CD4-positive, alpha-beta memory T cell (primary cell): ENCODE measurements at regions of chr19 and their contacts with region 1.

Region 1: DNA sequence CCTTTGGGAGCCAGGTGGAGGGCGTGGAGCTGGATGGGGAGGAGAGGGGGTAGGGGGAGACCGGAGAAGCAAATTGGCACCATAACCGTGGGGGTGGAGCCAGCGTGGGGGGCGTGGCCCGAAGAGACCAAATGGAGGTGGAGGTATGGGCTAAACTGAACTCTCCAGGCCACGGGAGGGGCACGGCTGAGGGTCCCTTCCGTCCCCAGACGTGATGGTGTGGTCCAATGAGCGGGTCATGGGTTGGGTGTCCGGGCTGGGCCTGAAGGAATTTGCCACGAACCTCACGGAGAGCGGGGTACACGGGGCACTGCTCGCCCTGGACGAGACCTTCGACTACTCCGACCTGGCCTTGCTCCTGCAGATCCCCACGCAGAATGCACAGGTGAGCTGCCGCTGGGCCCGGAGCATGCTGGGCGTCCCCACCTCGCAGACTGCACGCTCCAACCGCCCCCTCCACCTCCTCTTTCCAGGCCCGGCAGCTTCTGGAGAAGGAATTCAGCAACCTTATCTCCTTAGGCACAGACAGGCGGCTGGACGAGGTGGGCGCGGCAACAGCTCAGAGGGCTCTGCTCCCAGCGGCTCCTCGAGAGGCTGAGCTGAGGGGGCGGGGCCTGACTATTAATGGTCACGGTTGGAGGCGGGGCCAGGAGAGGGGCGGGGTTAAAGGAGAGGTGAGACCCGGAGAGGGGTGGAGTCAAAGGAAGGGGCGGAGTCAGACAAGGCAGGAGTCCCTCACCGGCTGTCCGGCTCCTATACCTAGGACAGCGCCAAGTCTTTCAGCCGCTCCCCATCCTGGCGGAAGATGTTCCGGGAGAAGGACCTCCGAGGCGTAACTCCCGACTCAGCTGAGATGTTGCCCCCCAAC is 6.2 kb downstream of the HRC start:
- DNase-seq: peak; percentile 64 to 85 (median 69)
- H3K4me3 ChIP-seq: peak overlapping the region in 1 of 2 donors; percentile 42
- H3K4me3 Mint-ChIP-seq: peak overlapping the region; percentile 63 to 91 (median 74)
- H3K27ac ChIP-seq: no peak overlapping the region
- H3K27ac Mint-ChIP-seq: peak overlapping the region in 1 of 7 donors; percentile 71
- H3K4me1 ChIP-seq: peaks cover 46% of the 10 kb centered on the region
- H3K4me1 Mint-ChIP-seq: peaks cover 14 to 58% (median 26%) of the 10 kb centered on the region in 4 donors
- H3K27me3 ChIP-seq: peaks cover 39% of the 10 kb centered on the region
- H3K27me3 Mint-ChIP-seq: peaks cover 36 to 53% of the 10 kb centered on the region in 2 donors

Region 2: GRCh38 chr19:48999481-49000325 is 149.3 kb before region 1 on chr19:
- CTCF ChIA-PET with region 1: interaction called, 17 read pairs
- POLR2A ChIA-PET with region 1: no interaction called
- intact Hi-C with region 1: no loop called
- DNase-seq: peak; percentile 64 to 76 (median 69)
- H3K4me3 ChIP-seq: no peak overlapping the region
- H3K4me3 Mint-ChIP-seq: peak overlapping the region in 1 of 8 donors; percentile 8
- H3K27ac ChIP-seq: no peak overlapping the region
- H3K27ac Mint-ChIP-seq: peak overlapping the region in 1 of 7 donors; percentile 46
- H3K4me1 ChIP-seq: peaks cover 3% of the 10 kb centered on the region
- H3K4me1 Mint-ChIP-seq: peaks cover 7 to 24% (median 15%) of the 10 kb centered on the region in 4 donors
- H3K27me3 ChIP-seq: no peaks in the 10 kb centered on the region
- H3K27me3 Mint-ChIP-seq: no peaks in the 10 kb centered on the region

Region 3: GRCh38 chr19:49073514-49074378 is 75.3 kb before region 1 on chr19:
- CTCF ChIA-PET with region 1: interaction called, 3 read pairs
- POLR2A ChIA-PET with region 1: no interaction called
- intact Hi-C with region 1: loop called (anchors 1 kb)
- DNase-seq: no peak
- H3K4me3 ChIP-seq: no peak overlapping the region
- H3K4me3 Mint-ChIP-seq: peak overlapping the region in 5 of 8 donors; percentile 8 to 82 (median 60)
- H3K27ac ChIP-seq: no peak overlapping the region
- H3K27ac Mint-ChIP-seq: no peak overlapping the region
- H3K4me1 ChIP-seq: no peaks in the 10 kb centered on the region
- H3K4me1 Mint-ChIP-seq: peaks cover 6 to 19% (median 12%) of the 10 kb centered on the region in 4 donors
- H3K27me3 ChIP-seq: peaks cover 9% of the 10 kb centered on the region
- H3K27me3 Mint-ChIP-seq: peaks cover 41 to 45% of the 10 kb centered on the region in 2 donors

Region 4: GRCh38 chr19:49118565-49119410 is 30.2 kb before region 1 on chr19 and contains the start of gene C19orf73:
- CTCF ChIA-PET with region 1: interaction called, 6 read pairs
- POLR2A ChIA-PET with region 1: interaction called, 9 read pairs
- intact Hi-C with region 1: loop called (anchors 2 kb)
- DNase-seq: peak; percentile 94 to 98 (median 97)
- H3K4me3 ChIP-seq: peak within 1 kb of the TSS; percentile 73 to 78
- H3K4me3 Mint-ChIP-seq: peak within 1 kb of the TSS; percentile 83 to 93 (median 88)
- H3K27ac ChIP-seq: peak within 1 kb of the TSS; percentile 79
- H3K27ac Mint-ChIP-seq: peak within 1 kb of the TSS; percentile 90 to 96 (median 94)
- H3K4me1 ChIP-seq: peaks cover 31% of the 10 kb centered on the region
- H3K4me1 Mint-ChIP-seq: peaks cover 22 to 42% (median 36%) of the 10 kb centered on the region in 4 donors
- H3K27me3 ChIP-seq: no peaks in the 10 kb centered on the region
- H3K27me3 Mint-ChIP-seq: no peaks in the 10 kb centered on the region
- total RNA-seq, gene C19orf73: 1.7 to 1.9 TPM

Region 5: GRCh38 chr19:49127674-49128544 is 21.1 kb before region 1 on chr19:
- CTCF ChIA-PET with region 1: interaction called, 3 read pairs
- POLR2A ChIA-PET with region 1: interaction called, 5 read pairs
- intact Hi-C with region 1: loop called (anchors 2 kb)
- DNase-seq: peak; percentile 93 to 96 (median 95)
- H3K4me3 ChIP-seq: peak overlapping the region in 1 of 2 donors; percentile 57
- H3K4me3 Mint-ChIP-seq: peak overlapping the region; percentile 81 to 91 (median 89)
- H3K27ac ChIP-seq: no peak overlapping the region
- H3K27ac Mint-ChIP-seq: peak overlapping the region; percentile 80 to 97 (median 93)
- H3K4me1 ChIP-seq: peaks cover 14% of the 10 kb centered on the region
- H3K4me1 Mint-ChIP-seq: peaks cover 8 to 25% (median 14%) of the 10 kb centered on the region in 4 donors
- H3K27me3 ChIP-seq: no peaks in the 10 kb centered on the region
- H3K27me3 Mint-ChIP-seq: no peaks in the 10 kb centered on the region